ENCODE measurements at regions of chr22 and their contacts with region 1.

Region 1: DNA sequence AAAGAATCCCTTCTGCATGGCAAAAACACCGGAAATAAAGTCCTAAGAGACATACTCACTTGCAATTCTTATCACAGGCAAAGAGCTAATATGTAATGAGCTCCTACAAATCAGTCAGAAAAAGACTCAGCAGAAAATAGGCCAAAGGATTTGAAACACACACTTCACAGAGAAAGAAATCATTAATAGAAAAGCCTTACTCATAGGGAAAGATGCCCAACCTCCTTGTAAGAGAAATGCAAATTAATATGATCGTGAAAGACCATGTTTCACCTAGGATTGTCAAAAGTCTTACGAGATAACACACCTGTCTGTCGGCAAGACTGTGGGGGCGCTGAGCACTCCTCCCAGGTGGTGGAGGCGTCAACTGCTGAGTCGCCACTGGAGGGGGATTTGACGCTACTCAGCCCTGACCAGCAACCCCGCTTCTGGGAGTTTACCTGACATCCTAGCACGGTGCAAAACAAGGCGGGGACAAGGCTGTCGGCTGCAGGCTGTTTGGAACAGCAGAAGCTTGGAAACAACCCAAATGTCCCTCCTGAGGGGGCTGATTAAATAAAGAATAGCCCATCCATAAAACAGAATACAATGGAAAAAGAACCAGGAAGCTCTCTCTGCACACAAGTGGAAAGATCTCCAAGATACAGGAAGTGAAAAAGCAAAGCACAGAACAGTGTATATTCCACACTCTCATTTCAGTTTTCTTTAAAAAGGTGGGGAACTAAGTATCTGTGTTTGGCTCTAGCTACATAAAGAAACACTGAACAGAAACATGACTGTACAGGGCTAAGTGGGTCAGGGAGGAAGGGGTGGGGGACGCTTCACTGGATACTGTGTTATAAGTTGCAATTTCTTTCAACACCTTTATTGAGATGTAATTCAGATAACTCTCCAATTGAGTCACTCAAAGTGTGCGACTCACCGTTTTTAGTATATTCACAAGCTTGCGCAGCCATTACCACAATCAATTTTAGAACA is 11.5 kb downstream of the CSNK1E start:
- DNase-seq: peak; percentile 89
- ATAC-seq: peak; percentile 89
- H3K4me3 ChIP-seq: peak overlapping the region; percentile 26; the same call in 1 of the 2 replicates
- H3K27ac ChIP-seq: peak overlapping the region; percentile 75
- H3K4me1 ChIP-seq: peaks cover 44% of the 10 kb centered on the region
- H3K27me3 ChIP-seq: no peaks in the 10 kb centered on the region
- CTCF ChIP-seq: peak; percentile 20 to 42 (median 26); a peak in 4 of 6 replicates
- EP300 ChIP-seq: peak; percentile 66 to 81
- POLR2A ChIP-seq: peak; percentile 22; the same call in 1 of the 2 replicates
- RAD21 ChIP-seq: peak; percentile 34; the same call in 1 of the 2 replicates

Region 2: GRCh38 chr22:38163844-38164550 is 141.8 kb before region 1 on chr22:
- CTCF ChIA-PET with region 1: no interaction called
- POLR2A ChIA-PET with region 1: no interaction called
- RAD21 ChIA-PET with region 1: no interaction called
- SMC1A ChIA-PET with region 1: no interaction called
- in situ Hi-C with region 1: no loop called
- intact Hi-C with region 1: loop called (anchors 5 kb)
- DNase-seq: no peak
- ATAC-seq: no peak
- H3K4me3 ChIP-seq: no peak overlapping the region
- H3K27ac ChIP-seq: no peak overlapping the region
- H3K4me1 ChIP-seq: peaks cover 20% of the 10 kb centered on the region
- H3K27me3 ChIP-seq: no peaks in the 10 kb centered on the region
- CTCF ChIP-seq: no peak
- EP300 ChIP-seq: no peak
- POLR2A ChIP-seq: no peak
- RAD21 ChIP-seq: no peak

Region 3: DNA sequence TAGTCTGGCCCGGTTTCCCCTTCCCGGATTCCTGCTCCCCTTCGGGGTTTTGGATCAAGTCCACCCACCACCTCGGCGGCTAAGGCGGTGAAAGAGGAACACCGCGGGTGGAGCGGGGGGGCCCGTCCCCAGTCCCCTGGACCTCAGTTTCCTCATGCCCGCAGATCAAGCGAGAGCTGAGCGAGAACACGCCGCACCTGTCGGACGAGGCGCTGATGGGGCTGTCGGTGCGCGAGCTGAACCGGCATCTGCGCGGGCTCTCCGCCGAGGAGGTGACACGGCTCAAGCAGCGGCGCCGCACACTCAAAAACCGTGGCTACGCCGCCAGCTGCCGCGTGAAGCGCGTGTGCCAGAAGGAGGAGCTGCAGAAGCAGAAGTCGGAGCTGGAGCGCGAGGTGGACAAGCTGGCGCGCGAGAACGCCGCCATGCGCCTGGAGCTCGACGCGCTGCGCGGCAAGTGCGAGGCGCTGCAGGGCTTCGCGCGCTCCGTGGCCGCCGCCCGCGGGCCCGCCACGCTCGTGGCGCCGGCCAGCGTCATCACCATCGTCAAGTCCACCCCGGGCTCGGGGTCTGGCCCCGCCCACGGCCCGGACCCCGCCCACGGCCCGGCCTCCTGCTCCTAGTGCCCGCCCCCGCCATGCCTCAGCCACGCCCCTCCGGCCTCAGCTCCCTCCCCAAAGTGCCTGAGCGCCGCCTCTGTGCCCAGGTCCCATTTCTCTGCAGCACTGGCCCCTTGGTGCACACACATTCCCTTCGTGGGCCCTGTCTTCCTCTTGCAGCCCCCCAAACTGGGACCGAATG is 91.3 kb before region 1 on chr22:
- CTCF ChIA-PET with region 1: no interaction called
- POLR2A ChIA-PET with region 1: interaction called, 8 read pairs
- RAD21 ChIA-PET with region 1: no interaction called
- SMC1A ChIA-PET with region 1: no interaction called
- in situ Hi-C with region 1: no loop called
- intact Hi-C with region 1: loop called (anchors 5 kb)
- DNase-seq: no peak
- ATAC-seq: peak; percentile 76
- H3K4me3 ChIP-seq: peak overlapping the region; percentile 58
- H3K27ac ChIP-seq: peak overlapping the region; percentile 5; the same call in 1 of the 2 replicates
- H3K4me1 ChIP-seq: peaks cover 46% of the 10 kb centered on the region
- H3K27me3 ChIP-seq: no peaks in the 10 kb centered on the region
- CTCF ChIP-seq: peak in 1 of 3 experiments; percentile 10; a peak in 2 of 6 replicates
- EP300 ChIP-seq: no peak
- POLR2A ChIP-seq: peak; percentile 55; the same call in 1 of the 2 replicates
- RAD21 ChIP-seq: no peak

Region 4: DNA sequence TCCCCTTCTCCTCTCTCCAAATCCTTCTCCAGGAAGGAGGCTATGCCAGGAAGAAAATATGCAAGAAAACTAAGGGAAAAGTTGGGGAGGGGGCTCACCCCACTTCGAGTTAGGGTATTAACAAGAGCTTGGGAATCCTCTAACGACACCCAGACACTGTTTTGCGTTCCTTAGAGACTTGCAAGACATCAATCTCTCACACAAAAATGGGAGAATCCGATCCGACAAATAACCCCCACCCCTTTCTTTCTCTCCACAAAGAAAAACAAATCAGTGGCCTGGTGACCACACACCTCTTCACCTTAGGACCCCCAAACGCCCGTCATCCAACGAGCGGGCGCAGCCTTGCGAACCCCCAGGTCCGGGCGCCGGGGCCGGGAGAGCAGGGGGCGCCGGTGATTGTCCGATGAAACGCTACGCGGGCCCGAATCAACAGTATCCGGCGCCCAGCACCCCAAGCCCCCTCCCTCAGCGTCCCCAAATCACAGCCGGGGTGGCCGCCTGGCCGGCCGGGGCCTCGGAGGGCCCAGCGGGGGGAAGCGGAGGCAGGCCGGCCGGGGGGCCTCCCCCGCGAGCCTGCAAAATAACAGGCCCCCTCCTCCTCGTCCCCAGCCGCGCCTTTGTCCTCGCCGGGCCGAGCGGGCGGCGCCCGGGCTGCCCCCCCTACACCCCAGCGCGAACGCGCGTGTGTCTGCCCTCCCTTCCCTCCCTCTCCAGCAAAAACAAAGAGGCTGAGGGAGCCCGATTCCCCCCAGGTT is 10.8 kb after region 1 on chr22:
- CTCF ChIA-PET with region 1: interaction called, 8 read pairs
- POLR2A ChIA-PET with region 1: interaction called, 5 read pairs
- RAD21 ChIA-PET with region 1: interaction called, 10 read pairs
- SMC1A ChIA-PET with region 1: interaction called, 18 read pairs
- in situ Hi-C with region 1: no loop called
- intact Hi-C with region 1: no loop called
- DNase-seq: no peak
- ATAC-seq: peak; percentile 39
- H3K4me3 ChIP-seq: peak overlapping the region; percentile 82
- H3K27ac ChIP-seq: peak overlapping the region; percentile 85
- H3K4me1 ChIP-seq: peaks cover 39% of the 10 kb centered on the region
- H3K27me3 ChIP-seq: no peaks in the 10 kb centered on the region
- CTCF ChIP-seq: no peak
- EP300 ChIP-seq: no peak
- POLR2A ChIP-seq: 0 out of 2 replicates have a peak, but pooled peaks have one; percentile 42
- RAD21 ChIP-seq: no peak

Region 5: DNA sequence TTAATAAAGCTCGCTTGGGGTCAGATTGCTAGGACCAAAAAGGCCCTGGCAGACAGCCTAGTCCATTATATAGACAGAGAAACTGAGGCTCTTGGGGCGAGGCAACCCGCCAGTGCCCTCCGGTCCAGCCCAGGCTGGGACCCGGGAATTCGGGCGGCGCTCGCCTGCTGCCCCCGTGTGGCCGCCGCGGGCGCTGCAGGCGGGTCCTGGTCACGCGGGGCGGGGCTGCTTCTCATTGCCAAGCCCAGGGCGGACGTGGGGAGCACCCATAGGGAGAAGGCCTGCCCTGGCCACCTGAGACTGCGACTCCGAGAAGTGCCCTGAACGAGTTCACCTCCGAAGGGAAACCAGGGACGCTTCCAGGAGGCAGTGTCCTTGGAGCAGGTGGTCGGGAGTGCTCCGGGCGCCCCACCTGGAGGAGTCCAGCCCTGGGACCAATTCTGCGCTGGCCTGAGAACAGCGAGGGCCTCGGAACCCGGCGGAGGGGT is 47.4 kb after region 1 on chr22:
- CTCF ChIA-PET with region 1: interaction called, 12 read pairs
- POLR2A ChIA-PET with region 1: no interaction called
- RAD21 ChIA-PET with region 1: no interaction called
- SMC1A ChIA-PET with region 1: interaction called, 4 read pairs
- in situ Hi-C with region 1: no loop called
- intact Hi-C with region 1: loop called (anchors 5 kb)
- DNase-seq: no peak
- ATAC-seq: peak; percentile 95
- H3K4me3 ChIP-seq: no peak overlapping the region
- H3K27ac ChIP-seq: no peak overlapping the region
- H3K4me1 ChIP-seq: no peaks in the 10 kb centered on the region
- H3K27me3 ChIP-seq: no peaks in the 10 kb centered on the region
- CTCF ChIP-seq: peak; percentile 91 to 94 (median 93)
- EP300 ChIP-seq: no peak
- POLR2A ChIP-seq: peak; percentile 40; the same call in 1 of the 2 replicates
- RAD21 ChIP-seq: peak; percentile 90

Measured in GM12878 (cell line).